Cardiac septum (tissue), 1 donor: ENCODE measurements at regions of chr4 and their contacts with region 1.

Region 1: GRCh38 chr4:108560616-108561015 is 59.8 kb upstream of the RPL34 start:
- DNase-seq: no peak

Region 2: DNA sequence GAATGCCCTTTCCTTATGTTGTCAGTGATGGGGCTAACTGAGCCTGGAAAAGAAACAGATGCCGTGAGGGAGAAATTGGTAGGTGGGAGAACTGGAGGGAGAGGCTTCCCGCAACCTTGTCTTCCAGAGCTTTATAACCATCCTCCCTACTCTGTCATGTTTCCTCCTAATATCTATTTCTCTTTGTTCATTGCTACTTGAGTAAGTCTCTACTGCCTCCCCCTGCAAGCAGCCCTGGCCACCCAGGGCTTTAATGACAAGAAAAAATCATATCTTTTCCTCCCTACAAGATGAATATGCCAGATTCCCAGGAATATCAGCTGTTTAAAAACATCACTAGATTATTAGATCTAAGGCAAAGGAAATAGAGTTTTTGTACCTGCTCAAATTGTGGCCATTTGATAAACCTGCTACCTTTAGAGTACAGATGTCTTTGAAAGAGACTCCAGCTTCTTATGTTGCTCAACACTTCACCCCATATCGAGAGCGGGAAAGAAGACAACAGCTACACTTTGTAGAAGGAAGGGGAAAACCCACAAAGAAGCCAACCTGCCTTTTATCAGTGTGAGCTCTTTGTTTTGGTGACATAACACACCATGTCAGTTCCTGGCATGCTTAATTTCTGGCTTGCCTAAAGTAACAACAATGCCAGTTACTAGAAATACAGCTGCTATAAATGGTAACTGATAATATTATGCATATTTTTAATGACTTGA is 205.3 kb before region 1 on chr4:
- intact Hi-C with region 1: loop called (anchors 10 kb)
- DNase-seq: no peak

Region 3: GRCh38 chr4:108492816-108493595 is 67.6 kb before region 1 on chr4:
- intact Hi-C with region 1: no loop called
- DNase-seq: no peak